PC-9 (cell line): ENCODE measurements at regions of chr17 and their contacts with region 1.

Region 1: GRCh38 chr17:1179112-1179817 is 516 bp downstream of the ABR start:
- DNase-seq: peak; percentile 4 to 49
- H3K4me3 ChIP-seq: peak overlapping the region; percentile 73
- H3K27ac ChIP-seq: no peak overlapping the region
- H3K4me1 ChIP-seq: no peaks in the 10 kb centered on the region; the same call in 1 of the 2 replicates
- H3K27me3 ChIP-seq: peaks cover 21% of the 10 kb centered on the region
- CTCF ChIP-seq: no peak

Region 2: DNA sequence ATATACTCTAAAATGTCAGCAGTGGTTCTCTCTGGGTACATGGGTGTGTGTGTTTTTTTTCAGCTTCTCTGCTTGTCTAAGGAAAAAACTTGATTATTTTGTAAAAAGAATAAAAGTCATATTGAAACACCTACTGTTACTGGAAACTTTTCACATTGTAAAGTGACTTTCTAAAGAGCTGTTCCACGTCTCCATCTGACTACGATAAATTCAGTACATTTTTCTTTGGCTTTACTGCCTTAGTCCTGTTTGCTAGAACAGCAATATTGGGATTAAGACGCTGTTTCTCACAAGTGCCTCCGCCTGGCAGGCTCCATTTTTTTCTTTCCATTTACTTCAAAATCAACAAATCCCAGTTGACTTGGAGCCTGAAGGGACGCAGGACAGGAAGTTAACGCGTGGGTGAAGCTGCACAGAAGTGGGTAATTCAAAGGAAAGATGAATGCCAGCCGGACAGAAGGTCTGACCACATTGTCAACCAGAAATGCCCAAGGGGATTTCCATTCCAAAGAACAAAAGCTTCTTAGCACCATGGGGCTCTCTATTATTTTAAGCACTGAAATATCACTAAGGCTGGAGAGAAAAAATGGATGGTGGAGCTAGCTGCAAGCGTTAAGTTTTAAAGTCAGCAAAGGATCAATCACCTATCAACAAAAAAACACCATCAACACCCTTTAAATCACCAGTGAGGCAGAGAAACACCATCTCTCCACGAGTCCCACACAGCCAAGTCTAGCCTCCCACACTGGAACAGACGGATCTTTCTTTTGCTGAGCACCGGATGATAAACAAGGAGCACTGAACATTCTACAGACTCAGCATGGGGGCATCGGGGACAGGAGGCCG is 405.6 kb before region 1 on chr17:
- CTCF ChIA-PET with region 1: no interaction called
- POLR2A ChIA-PET with region 1: no interaction called
- intact Hi-C with region 1: no loop called
- DNase-seq: no peak
- H3K4me3 ChIP-seq: no peak overlapping the region
- H3K27ac ChIP-seq: no peak overlapping the region
- H3K4me1 ChIP-seq: no peaks in the 10 kb centered on the region
- H3K27me3 ChIP-seq: no peaks in the 10 kb centered on the region
- CTCF ChIP-seq: no peak

Region 3: DNA sequence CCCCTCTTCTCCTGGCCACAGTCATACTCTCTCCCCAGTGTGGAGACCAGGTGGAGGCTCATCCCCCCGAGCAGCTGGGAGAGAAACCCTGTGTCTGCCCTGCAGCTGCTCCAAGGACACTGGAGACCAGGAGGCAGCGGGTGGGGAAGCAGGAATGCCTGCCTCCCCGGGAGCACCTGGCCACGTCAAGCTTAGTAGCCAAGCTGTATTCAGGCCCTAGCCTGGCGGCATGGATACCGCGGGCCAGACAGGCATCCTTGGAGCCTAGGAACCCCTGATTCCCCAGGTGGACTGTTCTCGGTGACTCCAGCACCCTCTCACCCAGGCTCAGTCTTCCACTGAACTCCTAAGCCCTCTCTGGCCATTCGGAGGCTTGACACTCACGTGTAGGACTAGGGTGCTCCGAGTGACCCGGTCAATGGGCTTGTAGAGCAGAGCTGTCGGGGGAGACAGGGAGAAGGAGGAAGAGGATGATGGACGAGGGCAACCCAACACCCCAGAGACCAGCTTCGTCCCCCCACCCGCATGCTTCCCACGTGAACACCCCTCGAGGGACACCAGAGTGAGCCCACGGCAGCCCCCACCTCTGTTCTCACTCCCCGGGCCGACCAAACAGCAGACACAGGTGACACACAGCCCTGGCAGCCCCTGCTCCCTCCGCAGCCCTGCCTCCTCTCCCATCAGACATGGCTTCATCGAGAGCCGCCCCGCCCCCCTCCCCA is 105.9 kb before region 1 on chr17:
- CTCF ChIA-PET with region 1: no interaction called
- POLR2A ChIA-PET with region 1: interaction called, 11 read pairs
- intact Hi-C with region 1: no loop called
- DNase-seq: no peak
- H3K4me3 ChIP-seq: no peak overlapping the region
- H3K27ac ChIP-seq: no peak overlapping the region
- H3K4me1 ChIP-seq: peaks cover 5% of the 10 kb centered on the region
- H3K27me3 ChIP-seq: no peaks in the 10 kb centered on the region
- CTCF ChIP-seq: no peak

Region 4: DNA sequence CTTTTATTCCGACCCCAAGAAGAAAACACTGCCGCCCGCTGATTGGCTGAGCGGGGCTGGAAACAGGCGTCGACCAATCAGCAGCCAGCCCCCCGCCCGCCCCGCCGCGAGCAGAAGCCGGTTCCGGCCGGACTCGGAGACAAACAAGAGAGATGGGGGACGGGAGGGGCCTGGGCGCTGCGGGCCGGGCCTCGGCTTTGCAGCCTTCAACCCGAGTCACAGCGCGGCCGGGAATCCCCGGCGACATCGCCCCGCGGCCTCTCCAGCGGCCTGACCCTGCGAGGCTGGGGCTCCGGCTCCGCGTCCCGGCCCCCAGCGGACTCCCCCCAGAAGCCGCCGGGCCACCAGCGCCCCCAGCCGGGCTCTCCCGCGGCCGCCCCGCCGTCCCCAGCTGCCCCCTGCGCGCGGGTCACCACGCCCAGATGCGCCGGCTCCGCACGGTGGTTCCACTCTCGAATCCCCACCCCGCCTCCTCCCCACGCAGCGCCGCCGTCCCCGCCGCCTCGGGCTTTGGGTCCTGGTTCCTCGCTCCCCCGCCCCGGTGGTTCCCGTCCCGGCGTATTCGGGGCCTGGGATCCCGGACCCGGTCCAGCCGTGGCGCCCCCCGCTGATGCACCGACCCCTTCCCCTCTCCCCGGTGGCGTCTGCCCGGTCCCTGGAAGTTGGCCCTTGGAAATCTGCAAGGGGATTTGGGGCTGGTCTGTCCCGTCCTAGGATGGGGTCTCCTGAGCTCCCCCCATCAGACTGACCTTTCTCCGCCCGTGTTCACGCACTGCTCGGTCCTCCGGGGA is 449.8 kb after region 1 on chr17:
- CTCF ChIA-PET with region 1: no interaction called
- POLR2A ChIA-PET with region 1: no interaction called
- intact Hi-C with region 1: no loop called
- DNase-seq: peak; percentile 74 to 91
- H3K4me3 ChIP-seq: peak overlapping the region; percentile 74
- H3K27ac ChIP-seq: no peak overlapping the region
- H3K4me1 ChIP-seq: peaks cover 8% of the 10 kb centered on the region; the same call in 1 of the 2 replicates
- H3K27me3 ChIP-seq: no peaks in the 10 kb centered on the region
- CTCF ChIP-seq: no peak